Activated CD4-positive, alpha-beta T cell treated with anti-CD3 and anti-CD28 coated beads for 36 hours (primary cell): ENCODE measurements at regions of chrX and their contacts with region 1.

Region 1: DNA sequence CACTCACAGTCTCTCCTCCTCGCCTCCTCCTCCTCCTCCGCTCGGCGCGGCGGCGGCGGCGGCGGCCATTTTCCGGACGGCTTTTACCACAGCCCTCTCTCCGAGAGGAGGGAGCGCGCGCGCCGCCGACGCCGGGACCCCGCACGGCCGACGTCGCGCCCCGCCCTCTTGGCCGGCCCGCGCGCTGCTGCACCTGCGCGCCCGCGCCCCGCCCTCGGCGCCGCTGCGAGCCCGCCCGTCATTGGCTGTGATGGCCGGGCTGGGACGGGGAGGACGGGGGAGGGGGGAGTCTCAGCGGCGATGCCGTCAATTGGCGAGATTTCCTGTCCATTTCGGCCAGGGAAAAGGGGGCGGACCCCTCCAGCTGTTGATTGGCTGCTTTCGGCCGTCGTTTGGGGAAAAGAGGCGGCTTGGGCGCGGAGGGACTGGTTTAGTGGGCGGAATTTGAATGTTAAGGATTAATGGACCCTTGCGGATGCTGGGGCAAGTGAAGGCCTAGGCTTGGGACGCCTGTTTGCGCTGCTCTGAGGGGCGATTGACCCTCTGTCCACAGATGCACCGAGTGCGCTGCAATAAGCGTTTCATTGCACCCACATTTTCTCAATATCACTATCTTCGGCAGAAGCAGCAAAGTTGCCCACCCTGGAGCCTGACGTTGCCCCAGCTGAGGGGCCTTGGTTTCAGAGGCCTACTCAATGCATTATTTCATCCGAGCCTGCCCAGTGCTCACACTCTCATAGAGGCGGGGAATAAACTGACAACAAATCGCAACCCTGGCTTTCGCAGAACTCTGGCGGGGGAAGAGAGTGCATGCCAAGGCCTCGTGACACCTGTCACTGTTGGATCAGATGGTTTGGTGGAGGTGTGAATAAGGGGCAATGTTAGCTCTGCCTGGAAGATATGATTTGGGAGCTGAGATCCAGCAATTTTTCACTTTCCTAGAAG is at the start of gene MECP2:
- DNase-seq: peak; percentile 93
- ATAC-seq: peak; percentile 87
- H3K4me3 Mint-ChIP-seq: peak within 1 kb of the TSS; percentile 81
- H3K27ac Mint-ChIP-seq: peak within 1 kb of the TSS; percentile 96
- H3K4me1 Mint-ChIP-seq: peaks cover 56% of the 10 kb centered on the region
- H3K27me3 Mint-ChIP-seq: peaks cover 2% of the 10 kb centered on the region
- total RNA-seq, gene MECP2: 50.7 to 60.0 TPM

Region 2: GRCh38 chrX:153794018-153794896 is 303.6 kb before region 1 on chrX and contains the starts of genes IDH3G and SSR4:
- CTCF ChIA-PET with region 1: no interaction called
- POLR2A ChIA-PET with region 1: no interaction called
- intact Hi-C with region 1: loop called in 1 of 2 experiments (anchors 1 kb)
- DNase-seq: peak; percentile 96
- ATAC-seq: peak; percentile 97
- H3K4me3 Mint-ChIP-seq: peak within 1 kb of the TSS; percentile 93
- H3K27ac Mint-ChIP-seq: peak within 1 kb of the TSS; percentile 93
- H3K4me1 Mint-ChIP-seq: peaks cover 21% of the 10 kb centered on the region
- H3K27me3 Mint-ChIP-seq: no peaks in the 10 kb centered on the region
- total RNA-seq, gene IDH3G: 48.8 to 62.4 TPM
- total RNA-seq, gene SSR4: 124 to 146 TPM

Region 3: DNA sequence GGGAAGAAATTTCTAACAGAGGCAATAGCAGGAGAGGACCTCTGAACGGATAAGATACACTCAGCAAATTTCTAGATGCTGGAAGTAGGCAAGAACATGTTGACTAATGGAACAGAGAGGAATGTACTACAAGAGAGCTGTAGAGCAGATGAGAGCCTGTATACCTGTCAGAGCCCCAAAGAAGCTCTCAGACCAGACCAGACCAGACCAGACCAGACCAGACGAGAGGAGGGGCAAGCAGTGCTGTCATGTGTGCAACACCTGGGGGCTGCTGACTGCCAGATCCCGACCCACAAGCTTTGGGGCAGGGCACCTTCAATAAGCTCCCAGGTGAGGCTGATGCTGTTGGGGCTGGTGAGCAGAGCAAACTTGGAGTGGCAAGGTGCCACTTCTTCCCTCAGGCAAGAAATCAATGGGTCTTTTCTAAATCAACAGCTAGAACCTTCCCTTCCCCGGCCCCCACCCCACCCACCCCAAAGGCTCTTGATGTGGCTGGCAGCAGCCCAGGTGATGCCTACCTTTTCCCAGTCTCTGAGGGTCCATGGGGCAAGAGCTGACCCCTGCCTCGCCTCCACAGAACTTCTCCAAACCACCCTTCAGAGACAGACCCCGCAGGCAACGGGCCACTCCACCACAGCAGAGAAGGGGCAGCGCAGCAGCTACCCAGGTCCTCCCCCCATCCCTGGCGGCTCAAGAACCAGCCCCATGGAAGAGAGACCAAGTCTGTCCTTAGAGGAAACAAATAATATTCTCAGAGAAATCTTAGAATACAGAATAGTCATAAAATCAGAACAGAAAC is 33.0 kb before region 1 on chrX:
- CTCF ChIA-PET with region 1: no interaction called
- POLR2A ChIA-PET with region 1: no interaction called
- intact Hi-C with region 1: no loop called
- DNase-seq: no peak
- ATAC-seq: no peak
- H3K4me3 Mint-ChIP-seq: no peak overlapping the region
- H3K27ac Mint-ChIP-seq: peak overlapping the region; percentile 51
- H3K4me1 Mint-ChIP-seq: peaks cover 64% of the 10 kb centered on the region
- H3K27me3 Mint-ChIP-seq: no peaks in the 10 kb centered on the region

Region 4: DNA sequence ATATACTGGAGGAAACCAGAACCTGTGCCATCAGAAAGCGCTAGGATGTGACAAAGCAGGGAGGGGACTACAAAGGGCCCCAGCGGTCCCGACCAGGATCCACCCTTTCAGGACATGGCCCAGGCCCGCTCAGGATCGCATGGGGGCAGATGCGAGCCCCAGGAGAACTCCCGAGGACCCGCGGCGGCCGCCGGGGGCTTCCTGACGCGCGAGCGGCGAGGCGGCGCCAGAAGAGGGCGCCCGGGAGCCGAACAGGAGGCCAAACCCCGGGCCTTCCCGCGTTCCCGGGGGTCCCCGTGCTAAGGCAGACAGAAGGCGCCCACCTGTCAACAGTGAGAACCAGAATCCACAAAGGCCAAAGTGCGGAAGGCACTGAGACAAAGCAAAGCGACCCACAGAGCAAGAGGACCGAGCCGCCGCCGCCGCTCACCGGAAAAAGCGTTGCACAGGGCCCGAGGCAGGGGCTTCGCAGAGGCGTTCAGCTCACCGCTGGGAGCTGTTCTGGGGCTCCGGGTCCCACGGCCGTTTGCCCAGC is 38.8 kb after region 1 on chrX:
- CTCF ChIA-PET with region 1: interaction called, 4 read pairs
- POLR2A ChIA-PET with region 1: interaction called, 3 read pairs
- intact Hi-C with region 1: loop called in 1 of 2 experiments (anchors 1 kb)
- DNase-seq: peak; percentile 81
- ATAC-seq: peak; percentile 76
- H3K4me3 Mint-ChIP-seq: peak overlapping the region; percentile 61
- H3K27ac Mint-ChIP-seq: peak overlapping the region; percentile 93
- H3K4me1 Mint-ChIP-seq: peaks cover 17% of the 10 kb centered on the region
- H3K27me3 Mint-ChIP-seq: no peaks in the 10 kb centered on the region

Region 5: DNA sequence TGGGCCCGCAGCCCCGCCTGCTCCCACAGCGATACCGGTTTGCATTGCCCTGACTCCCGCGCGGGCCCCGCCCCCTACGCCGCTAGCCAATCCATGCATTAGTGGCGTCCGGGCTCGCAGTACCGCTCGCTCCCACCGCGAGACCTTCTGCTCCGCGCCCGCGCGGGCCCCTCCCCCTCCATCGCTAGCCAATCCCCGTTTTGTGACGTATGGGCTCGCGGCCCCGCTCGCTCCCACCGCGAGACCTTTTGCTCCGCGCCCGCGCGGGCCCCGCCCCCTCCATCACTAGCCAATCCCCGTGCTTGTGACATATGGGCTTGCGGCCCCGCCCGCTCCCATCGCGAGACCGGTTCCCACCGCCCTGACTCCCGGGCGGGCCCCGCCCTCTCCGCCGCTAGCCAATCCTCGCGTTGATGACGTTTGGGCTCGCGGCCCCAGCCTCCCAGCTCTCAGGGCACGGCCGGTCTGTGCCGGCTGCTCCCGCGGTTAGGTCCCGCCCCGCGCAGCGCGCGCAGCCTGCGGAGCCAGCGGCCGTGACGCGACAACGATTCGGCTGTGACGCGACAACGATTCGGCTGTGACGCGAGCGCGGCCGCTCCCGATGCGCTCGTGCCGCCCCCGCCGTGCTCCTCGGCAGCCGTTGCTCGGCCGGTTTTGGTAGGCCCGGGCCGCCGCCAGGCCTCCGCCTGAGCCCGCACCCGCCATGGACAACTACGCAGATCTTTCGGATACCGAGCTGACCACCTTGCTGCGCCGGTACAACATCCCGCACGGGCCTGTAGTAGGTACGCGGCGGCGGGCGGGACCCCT is 281.1 kb after region 1 on chrX and contains the start of gene EMD:
- CTCF ChIA-PET with region 1: no interaction called
- POLR2A ChIA-PET with region 1: no interaction called
- intact Hi-C with region 1: loop called in 1 of 2 experiments (anchors 1 kb)
- DNase-seq: peak; percentile 98
- ATAC-seq: peak; percentile 88
- H3K4me3 Mint-ChIP-seq: peak within 1 kb of the TSS; percentile 84
- H3K27ac Mint-ChIP-seq: peak within 1 kb of the TSS; percentile 91
- H3K4me1 Mint-ChIP-seq: peaks cover 23% of the 10 kb centered on the region
- H3K27me3 Mint-ChIP-seq: no peaks in the 10 kb centered on the region
- total RNA-seq, gene EMD: 75.9 to 89.4 TPM

Region 6: GRCh38 chrX:154490414-154491083 is 392.7 kb after region 1 on chrX and contains the start of gene SLC10A3:
- CTCF ChIA-PET with region 1: no interaction called
- POLR2A ChIA-PET with region 1: no interaction called
- intact Hi-C with region 1: loop called in 1 of 2 experiments (anchors 2 kb)
- DNase-seq: peak; percentile 94
- ATAC-seq: peak; percentile 91
- H3K4me3 Mint-ChIP-seq: peak within 1 kb of the TSS; percentile 85
- H3K27ac Mint-ChIP-seq: peak within 1 kb of the TSS; percentile 89
- H3K4me1 Mint-ChIP-seq: peaks cover 17% of the 10 kb centered on the region
- H3K27me3 Mint-ChIP-seq: no peaks in the 10 kb centered on the region
- total RNA-seq, gene SLC10A3: 10.4 to 11.3 TPM